HEK293T (cell line): ENCODE measurements at regions of chr1 and their contacts with region 1.

Region 1: DNA sequence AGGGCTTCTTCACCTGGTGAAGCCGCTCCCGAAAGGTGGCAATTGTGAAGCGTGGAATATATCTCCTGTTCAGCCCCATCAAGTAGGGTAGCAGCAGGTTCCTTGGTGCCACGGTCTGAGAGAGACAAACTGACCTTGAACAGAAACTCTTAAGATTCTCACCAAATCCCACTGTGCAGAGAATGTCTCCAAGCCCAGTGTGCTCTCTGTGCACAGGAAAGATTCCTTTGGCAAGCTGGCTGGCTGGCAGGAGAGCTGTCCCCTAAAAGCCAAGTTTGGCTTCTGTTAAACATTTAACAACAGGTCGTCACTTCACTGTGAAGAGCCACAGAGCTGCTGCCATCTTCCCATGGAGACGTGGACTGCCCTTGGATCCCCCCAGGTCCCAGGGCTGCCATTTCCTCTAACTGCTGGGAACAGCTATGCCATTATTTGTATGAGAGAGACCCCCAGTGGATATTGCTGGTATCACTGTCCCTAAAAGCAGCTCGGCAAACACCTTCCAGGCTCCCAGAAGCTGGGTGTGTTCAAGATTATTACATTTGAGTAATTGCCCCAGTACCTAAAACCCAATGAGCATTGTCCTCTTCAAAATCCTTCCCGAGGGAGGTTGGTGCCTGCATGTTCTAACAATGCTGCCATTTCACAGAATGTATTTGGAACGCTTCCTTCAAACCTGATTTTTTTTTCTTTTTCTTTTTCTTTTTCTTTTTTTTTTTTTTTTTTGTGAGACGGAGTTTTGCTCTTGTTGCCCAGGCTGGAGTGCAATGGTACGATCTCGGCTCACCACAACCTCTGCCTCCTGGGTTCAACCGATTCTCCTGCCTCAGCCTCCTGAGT is 71.8 kb downstream of the CD58 start:
- DNase-seq: peak; percentile 89

Region 2: GRCh38 chr1:116139592-116140134 is 359.3 kb before region 1 on chr1:
- CTCF ChIA-PET with region 1: interaction called, 80 read pairs
- POLR2A ChIA-PET with region 1: interaction called, 5 read pairs
- DNase-seq: no peak